CD8-positive, alpha-beta T cell (primary cell): ENCODE measurements at regions of chr20 and their contacts with region 1.

Region 1: DNA sequence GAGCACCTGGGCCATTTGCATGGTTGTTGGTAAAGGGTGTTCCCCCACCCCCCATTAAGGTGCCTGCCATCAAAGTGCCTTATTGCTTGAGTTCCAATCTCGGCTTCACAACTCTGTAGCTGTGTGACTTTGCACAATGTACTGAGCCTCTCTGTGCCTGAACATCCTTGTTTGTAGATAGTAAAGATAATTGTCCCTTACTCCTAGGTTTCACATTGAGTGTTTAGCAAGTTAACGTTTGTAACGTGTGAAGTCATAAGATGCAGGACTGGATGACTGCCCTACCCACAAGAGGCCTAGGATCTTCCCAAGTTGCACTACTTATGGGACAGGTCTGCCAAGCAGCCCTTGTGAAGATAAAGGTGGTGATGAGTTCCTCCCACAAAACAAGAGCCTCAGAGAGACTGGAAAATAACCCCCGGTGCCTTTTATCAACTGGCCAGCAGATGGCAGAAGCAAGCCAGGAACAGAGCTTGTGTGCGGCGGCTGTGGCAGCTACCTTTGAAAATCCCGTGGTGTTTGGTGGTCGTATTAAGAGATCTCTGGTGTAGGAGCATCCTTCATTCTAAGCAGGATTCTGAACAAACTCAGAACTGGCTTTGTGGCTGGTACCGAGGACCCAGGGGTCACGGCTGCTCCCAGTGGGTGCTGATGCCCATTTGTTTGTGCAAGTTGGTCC is 99.0 kb downstream of the CDH26 start:
- DNase-seq: peak; percentile 42 to 83 (median 65)
- ATAC-seq: peak; percentile 47
- H3K4me3 ChIP-seq: peak overlapping the region in 1 of 2 experiments; percentile 55
- H3K4me3 Mint-ChIP-seq: peak overlapping the region; percentile 13
- H3K27ac ChIP-seq: peak overlapping the region in 1 of 2 experiments; percentile 78
- H3K27ac Mint-ChIP-seq: peak overlapping the region; percentile 50
- H3K4me1 ChIP-seq: peaks cover 46% of the 10 kb centered on the region
- H3K4me1 Mint-ChIP-seq: peaks cover 46% of the 10 kb centered on the region
- H3K27me3 ChIP-seq: no peaks in the 10 kb centered on the region
- H3K27me3 Mint-ChIP-seq: no peaks in the 10 kb centered on the region
- CTCF ChIP-seq: peak; percentile 81

Region 2: DNA sequence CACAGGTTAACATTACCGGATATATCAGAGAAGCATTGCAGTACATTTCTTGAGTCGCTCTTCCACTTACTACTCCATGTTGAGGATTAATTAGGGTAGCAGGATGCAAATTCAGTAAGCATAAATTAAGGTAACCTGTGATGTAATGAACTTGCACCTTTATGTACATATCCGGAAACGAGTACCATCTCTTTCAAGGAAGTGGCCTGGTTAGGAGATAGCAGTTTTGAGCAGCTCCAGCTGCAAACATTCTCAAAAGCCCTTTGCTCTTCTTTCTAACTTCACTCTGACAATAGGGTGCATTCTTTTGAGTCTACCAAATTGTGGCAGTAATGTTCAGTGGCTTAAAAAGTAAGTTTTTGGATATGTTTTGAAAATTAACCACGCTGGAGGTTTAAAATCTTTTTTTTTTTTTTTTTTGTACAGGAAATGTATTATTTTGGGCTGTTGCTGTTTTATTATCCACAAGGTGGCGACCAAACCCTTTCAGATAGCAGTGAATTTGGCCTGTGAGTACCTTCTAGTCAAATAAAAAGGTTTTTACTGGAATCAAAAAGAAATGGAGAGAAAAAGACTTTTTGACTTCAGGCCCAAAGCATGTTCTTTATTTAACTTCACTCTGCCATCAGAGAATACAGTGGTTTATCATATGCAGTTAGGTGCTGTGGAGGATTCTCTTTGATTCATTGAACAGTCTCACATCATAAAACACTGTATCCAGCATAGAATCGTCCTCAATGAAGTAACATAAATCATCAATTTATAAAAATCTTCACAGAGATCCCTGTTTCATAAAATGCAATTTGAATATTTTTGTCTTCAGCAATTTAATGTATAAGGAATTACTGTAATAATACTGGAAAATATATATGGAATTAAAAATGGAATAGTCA is 108.2 kb before region 1 on chr20:
- CTCF ChIA-PET with region 1: interaction called, 4 read pairs
- POLR2A ChIA-PET with region 1: no interaction called
- intact Hi-C with region 1: loop called (anchors 5 kb)
- DNase-seq: peak in 4 of 9 experiments; percentile 22 to 82 (median 53)
- ATAC-seq: peak; percentile 91
- H3K4me3 ChIP-seq: no peak overlapping the region
- H3K4me3 Mint-ChIP-seq: peak overlapping the region; percentile 57
- H3K27ac ChIP-seq: peak overlapping the region; percentile 30 to 37
- H3K27ac Mint-ChIP-seq: peak overlapping the region; percentile 91
- H3K4me1 ChIP-seq: peaks cover 6% of the 10 kb centered on the region
- H3K4me1 Mint-ChIP-seq: peaks cover 18% of the 10 kb centered on the region
- H3K27me3 ChIP-seq: no peaks in the 10 kb centered on the region
- H3K27me3 Mint-ChIP-seq: no peaks in the 10 kb centered on the region
- CTCF ChIP-seq: peak; percentile 89

Region 3: GRCh38 chr20:60262967-60263603 is 205.8 kb after region 1 on chr20:
- CTCF ChIA-PET with region 1: interaction called, 39 read pairs
- POLR2A ChIA-PET with region 1: interaction called, 3 read pairs
- intact Hi-C with region 1: loop called in 1 of 2 experiments (anchors 1 kb)
- DNase-seq: peak; percentile 6 to 70 (median 56)
- ATAC-seq: no peak
- H3K4me3 ChIP-seq: no peak overlapping the region
- H3K4me3 Mint-ChIP-seq: no peak overlapping the region
- H3K27ac ChIP-seq: no peak overlapping the region
- H3K27ac Mint-ChIP-seq: no peak overlapping the region
- H3K4me1 ChIP-seq: peaks cover 22% of the 10 kb centered on the region
- H3K4me1 Mint-ChIP-seq: peaks cover 19% of the 10 kb centered on the region
- H3K27me3 ChIP-seq: no peaks in the 10 kb centered on the region
- H3K27me3 Mint-ChIP-seq: no peaks in the 10 kb centered on the region
- CTCF ChIP-seq: peak; percentile 73

Region 4: GRCh38 chr20:61234803-61235113 is 1177.5 kb after region 1 on chr20:
- CTCF ChIA-PET with region 1: interaction called, 6 read pairs
- POLR2A ChIA-PET with region 1: no interaction called
- intact Hi-C with region 1: loop called in 1 of 2 experiments (anchors 1 kb)
- DNase-seq: no peak
- ATAC-seq: no peak
- H3K4me3 ChIP-seq: no peak overlapping the region
- H3K4me3 Mint-ChIP-seq: no peak overlapping the region
- H3K27ac ChIP-seq: no peak overlapping the region
- H3K27ac Mint-ChIP-seq: no peak overlapping the region
- H3K4me1 ChIP-seq: no peaks in the 10 kb centered on the region
- H3K4me1 Mint-ChIP-seq: no peaks in the 10 kb centered on the region
- H3K27me3 ChIP-seq: no peaks in the 10 kb centered on the region
- H3K27me3 Mint-ChIP-seq: peaks cover 4% of the 10 kb centered on the region
- CTCF ChIP-seq: no peak

Region 5: DNA sequence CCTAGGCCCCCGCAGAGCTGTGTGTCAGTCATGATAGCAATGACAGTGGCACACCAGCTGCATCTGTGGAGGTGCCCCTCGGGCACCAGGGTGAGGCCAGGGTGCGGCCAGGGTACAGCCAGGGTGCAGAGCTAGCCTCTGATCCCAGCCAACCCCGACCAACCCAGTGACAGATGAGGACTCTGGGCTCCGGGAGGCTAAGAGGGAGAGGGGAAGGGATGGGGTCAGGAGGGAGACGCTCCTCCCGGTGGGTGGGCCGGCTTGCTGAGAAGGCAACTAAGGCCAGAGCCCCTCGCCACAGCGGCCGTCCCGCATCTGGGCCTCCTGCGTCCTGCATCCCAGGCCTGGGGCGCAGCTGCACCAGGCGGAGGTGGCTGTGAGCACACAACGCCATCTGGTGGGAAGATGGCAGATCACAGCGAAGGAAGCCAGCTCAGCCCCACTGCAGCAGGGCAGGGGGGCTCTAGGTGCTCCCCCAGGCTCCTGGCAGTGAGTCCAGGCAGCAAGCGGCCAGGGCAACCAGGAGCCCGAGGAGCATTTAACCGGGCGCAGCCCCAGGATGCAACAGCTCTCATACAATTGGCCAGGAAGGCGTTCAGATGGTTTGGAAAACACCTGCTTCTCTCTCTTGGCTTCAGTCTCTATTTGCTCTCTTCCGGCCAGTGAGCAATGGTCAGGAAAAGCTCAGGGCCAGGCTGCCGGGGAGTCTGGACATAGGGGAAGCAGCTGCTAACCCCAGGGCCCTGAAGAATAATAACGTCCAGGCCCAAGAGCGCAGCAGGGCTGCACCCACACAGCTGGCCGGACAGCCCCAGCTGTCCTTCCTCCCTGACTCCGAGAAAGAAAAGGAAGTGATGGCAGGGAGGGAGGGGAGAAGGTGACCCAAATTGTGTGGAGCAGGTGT is 1839.0 kb after region 1 on chr20:
- CTCF ChIA-PET with region 1: interaction called, 4 read pairs
- POLR2A ChIA-PET with region 1: no interaction called
- intact Hi-C with region 1: loop called (anchors 2 to 10 kb)
- DNase-seq: peak in 4 of 9 experiments; percentile 14 to 52 (median 39)
- ATAC-seq: no peak
- H3K4me3 ChIP-seq: no peak overlapping the region
- H3K4me3 Mint-ChIP-seq: no peak overlapping the region
- H3K27ac ChIP-seq: no peak overlapping the region
- H3K27ac Mint-ChIP-seq: no peak overlapping the region
- H3K4me1 ChIP-seq: no peaks in the 10 kb centered on the region
- H3K4me1 Mint-ChIP-seq: no peaks in the 10 kb centered on the region
- H3K27me3 ChIP-seq: no peaks in the 10 kb centered on the region
- H3K27me3 Mint-ChIP-seq: peaks cover 6% of the 10 kb centered on the region
- CTCF ChIP-seq: peak; percentile 43